ENCODE measurements at regions of chr2 and their contacts with region 1.

Region 1: DNA sequence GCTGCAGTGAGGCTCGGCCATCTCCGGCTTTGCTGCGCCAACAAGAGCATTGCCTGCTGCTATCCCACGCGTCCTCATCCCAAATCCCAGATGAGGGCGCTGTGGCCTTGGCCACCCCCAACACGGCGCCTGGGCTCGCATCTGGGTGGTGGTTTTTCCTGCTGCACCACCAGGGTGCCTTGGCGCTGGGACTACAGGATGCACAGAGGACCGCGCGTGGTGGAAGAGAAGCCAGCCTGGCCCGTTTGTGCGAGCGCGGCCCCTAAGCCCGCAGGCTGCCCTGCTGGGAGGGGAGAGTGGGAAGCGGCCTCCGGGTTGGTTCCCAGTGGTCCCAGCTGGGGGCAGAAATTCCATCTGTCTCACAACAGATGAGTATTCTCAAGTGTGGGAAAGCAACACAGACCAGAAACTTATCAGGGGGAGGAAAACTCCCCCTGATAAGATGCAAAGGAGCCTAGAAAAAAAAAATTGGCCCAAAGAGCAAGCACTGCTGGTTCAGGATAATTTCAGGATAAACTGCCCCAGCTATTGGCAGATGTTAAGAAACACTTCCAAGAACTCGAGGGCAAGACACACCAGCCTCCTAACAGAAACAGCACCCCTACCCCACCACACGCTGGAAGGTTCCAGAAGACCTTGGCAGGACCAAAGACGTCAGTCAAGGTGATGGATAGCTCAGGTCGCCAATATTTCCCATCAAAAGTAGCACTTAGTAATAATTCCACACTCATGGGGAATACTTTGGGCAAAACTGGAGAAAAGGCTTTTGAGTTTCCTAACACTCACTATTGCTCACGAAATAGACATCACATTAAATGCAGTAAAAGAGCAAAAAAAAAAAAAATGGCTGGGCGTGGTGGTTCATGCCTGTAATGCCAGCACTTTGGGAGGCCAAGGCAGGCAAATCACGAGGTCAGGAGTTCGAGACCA is 152.1 kb downstream of the PXDN start:
- DNase-seq: peak; percentile 78
- H3K4me3 ChIP-seq: no peak overlapping the region
- H3K27ac ChIP-seq: peak overlapping the region in 1 of 2 donors; percentile 19
- H3K4me1 ChIP-seq: no peaks in the 10 kb centered on the region
- H3K27me3 ChIP-seq: no peaks in the 10 kb centered on the region
- CTCF ChIP-seq: peak; percentile 63 to 71 (median 64)
- POLR2A ChIP-seq: no peak

Region 2: DNA sequence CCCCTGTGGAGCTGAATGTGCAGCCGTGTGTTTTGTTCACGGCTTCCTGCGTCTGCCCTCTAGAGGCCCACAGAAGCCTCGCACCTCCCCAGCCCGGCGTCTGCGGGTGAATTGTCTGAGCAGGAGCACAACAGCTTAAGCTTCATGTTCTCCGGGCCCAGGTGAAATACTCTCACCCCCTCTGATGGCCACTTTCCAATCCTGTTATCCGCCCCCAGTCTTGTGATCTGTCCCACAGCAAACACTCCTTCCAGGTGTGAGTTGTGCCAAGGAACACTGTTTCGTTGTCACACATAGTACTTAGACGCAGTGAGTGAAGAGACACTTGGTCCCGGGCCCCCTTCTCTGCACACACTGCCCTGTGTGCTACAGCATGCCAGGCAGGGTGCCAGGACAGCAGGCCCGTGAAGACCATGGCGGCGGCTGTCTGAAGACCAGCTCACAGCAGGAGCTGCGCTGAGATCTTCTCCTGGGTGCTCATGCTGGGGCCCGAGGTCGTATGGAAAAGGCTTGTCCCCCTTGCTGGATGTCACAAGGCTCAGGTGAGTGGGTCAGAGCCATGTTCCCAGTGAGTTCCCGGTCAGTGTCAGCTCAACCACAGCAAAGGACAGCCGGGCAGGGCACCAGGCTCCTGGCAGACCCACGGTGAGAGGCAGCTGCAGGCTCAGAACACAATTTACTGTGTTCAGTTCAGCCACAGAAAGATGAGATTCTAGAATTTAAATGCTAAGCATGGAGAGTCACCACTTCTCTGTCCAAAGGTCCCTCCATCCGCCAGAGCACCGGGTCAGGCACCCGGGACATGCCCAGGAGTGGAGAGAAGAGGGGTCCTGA is 158.9 kb after region 1 on chr2:
- intact Hi-C with region 1: loop called (anchors 5 kb)
- DNase-seq: peak; percentile 70
- H3K4me3 ChIP-seq: no peak overlapping the region
- H3K27ac ChIP-seq: no peak overlapping the region
- H3K4me1 ChIP-seq: no peaks in the 10 kb centered on the region
- H3K27me3 ChIP-seq: no peaks in the 10 kb centered on the region
- CTCF ChIP-seq: peak; percentile 23 to 74 (median 59)
- POLR2A ChIP-seq: no peak

Region 3: DNA sequence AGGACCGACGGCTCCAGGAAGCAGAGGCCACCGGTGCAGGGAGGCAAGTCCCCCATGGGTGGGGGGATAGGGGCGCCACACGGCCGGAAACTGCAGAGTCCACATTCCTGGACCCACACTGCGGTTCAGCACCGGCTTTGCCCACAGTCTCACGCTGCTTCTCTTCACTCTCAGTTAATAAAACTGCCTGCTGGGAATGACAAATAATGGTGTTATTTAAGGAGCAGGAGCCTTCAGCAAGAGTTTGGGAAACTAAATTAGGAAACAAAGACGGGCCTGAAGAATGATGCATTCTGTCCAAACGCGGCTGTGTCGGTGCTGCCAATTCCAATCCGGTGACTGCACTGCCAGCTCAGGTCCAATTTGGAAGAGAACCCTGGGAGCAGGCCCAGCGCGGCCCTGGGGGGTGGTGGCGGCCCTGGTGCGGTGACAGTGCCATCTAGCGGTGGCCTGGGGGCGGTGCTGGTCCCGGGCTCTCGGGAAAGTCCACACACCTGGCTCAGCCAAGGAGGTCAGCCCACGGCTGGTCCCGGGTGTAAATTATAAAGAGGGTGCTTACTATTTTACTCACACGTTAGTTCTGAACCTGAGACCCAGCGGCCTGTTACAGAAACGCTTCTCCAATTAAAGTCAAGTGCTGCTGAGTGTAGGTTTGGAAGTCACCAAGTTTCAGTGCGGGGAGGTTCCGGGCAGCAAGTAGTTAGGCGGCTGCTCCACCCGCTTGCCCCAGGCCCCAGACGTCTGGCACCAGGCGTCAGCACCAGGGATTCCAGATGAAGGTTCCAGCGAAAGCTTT is 225.2 kb after region 1 on chr2:
- intact Hi-C with region 1: loop called (anchors 10 kb)
- DNase-seq: peak; percentile 82
- H3K4me3 ChIP-seq: no peak overlapping the region
- H3K27ac ChIP-seq: peak overlapping the region; percentile 27 to 50
- H3K4me1 ChIP-seq: peaks cover 9% of the 10 kb centered on the region
- H3K27me3 ChIP-seq: no peaks in the 10 kb centered on the region
- CTCF ChIP-seq: peak; percentile 65 to 94 (median 83)
- POLR2A ChIP-seq: no peak

Measured in testis (tissue), 5 donors.